ENCODE measurements at regions of chr5 and their contacts with region 1.

Region 1: GRCh38 chr5:72366324-72366976 is 46.3 kb downstream of the PTCD2 start:
- DNase-seq: peak; percentile 76

Region 2: DNA sequence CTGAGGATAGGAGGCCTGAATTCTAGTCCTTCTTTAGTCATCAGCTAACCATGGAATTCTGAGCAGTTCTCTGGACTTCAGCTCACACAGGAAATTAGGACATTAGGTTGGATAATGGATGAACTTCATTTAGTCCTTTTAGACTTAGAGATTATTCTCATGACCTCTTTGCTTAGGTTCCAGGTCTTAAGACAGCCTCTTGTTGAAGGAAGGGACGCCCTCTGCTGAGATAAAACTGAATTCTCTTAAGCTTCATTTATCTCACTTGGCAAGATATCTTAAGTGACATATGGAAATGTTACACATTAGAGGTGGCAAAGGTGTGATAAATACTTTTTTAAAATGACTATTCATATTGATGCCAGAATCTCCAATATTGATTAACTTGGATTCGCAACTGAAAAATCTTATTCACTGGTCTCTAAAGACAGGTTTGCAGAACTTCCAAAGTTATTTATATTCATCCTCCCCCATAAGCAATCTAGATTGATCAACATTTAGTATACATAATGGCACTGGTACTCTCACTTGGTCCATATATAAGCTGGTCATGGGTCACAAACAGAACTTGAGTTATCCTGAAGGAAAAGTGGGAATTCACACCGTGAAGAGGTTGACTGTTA is 157.6 kb after region 1 on chr5:
- intact Hi-C with region 1: loop called (anchors 1 kb)
- DNase-seq: no peak

Measured in cardiac septum (tissue), 1 donor.